Motor neuron (in vitro differentiated cells): ENCODE measurements at regions of chr14 and their contacts with region 1.

Region 1: GRCh38 chr14:97970222-97970621 is 1173.0 kb downstream of the VRK1 start:
- ATAC-seq: no peak
- H3K4me3 ChIP-seq: no peak overlapping the region
- H3K27ac ChIP-seq: no peak overlapping the region
- H3K4me1 ChIP-seq: peaks cover 2 to 11% of the 10 kb centered on the region in 2 donors

Region 2: GRCh38 chr14:99271951-99272631 is 1301.9 kb after region 1 on chr14 and contains the start of gene BCL11B:
- in situ Hi-C with region 1: loop called in 1 of 9 experiments (anchors 25 kb)
- ATAC-seq: peak; percentile 28 to 73 (median 54)
- H3K4me3 ChIP-seq: peak within 1 kb of the TSS; percentile 31 to 89 (median 41)
- H3K27ac ChIP-seq: no peak within 1 kb of the TSS
- H3K4me1 ChIP-seq: peaks cover 15 to 36% of the 10 kb centered on the region in 2 donors
- total RNA-seq, gene BCL11B: 0.04 to 3.0 (median 0.16) TPM